IMR-90 (cell line): ENCODE measurements at regions of chr20 and their contacts with region 1.

Region 1: DNA sequence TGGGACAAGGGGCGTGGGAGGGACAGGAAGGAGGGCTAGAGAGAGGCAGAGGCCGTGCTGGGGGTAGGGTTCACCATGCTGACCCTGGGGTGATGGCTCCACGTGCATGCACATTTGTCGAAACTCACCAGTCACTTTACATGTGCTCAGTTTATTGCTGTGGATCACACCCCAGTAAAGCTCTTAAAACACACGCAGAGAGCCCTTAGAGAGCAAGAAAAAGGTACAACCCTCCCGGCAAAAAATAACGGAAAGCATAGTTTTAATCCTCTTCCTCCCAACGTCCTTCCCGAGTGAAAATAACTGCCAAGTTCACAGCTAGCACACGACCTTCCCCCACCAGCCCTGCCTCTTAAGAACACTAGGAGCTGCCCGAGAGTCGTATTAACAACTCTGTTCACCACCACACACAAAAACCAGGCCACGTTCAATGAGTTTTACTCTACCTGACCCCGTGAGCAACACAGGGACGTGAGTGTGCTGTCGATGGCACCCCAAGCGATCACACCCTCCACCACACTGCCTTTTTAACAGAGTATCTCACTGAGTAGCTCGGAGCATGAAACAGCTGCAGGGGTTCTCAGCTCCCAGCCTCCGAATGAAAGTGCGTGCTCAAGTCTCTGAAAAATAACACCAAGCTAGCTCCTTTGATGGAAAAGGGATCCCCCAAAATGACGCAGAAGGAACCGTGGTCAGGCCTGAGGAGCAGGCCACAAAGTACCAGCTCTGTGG is 39.7 kb downstream of the TAF4 start:
- DNase-seq: peak; percentile 74
- ATAC-seq: peak; percentile 76
- H3K4me3 ChIP-seq: no peak overlapping the region
- H3K27ac ChIP-seq: no peak overlapping the region
- H3K4me1 ChIP-seq: peaks cover 6% of the 10 kb centered on the region; the same call in 1 of the 2 replicates
- H3K27me3 ChIP-seq: no peaks in the 10 kb centered on the region
- CTCF ChIP-seq: peak; percentile 73
- POLR2A ChIP-seq: no peak
- RAD21 ChIP-seq: peak; percentile 72

Region 2: DNA sequence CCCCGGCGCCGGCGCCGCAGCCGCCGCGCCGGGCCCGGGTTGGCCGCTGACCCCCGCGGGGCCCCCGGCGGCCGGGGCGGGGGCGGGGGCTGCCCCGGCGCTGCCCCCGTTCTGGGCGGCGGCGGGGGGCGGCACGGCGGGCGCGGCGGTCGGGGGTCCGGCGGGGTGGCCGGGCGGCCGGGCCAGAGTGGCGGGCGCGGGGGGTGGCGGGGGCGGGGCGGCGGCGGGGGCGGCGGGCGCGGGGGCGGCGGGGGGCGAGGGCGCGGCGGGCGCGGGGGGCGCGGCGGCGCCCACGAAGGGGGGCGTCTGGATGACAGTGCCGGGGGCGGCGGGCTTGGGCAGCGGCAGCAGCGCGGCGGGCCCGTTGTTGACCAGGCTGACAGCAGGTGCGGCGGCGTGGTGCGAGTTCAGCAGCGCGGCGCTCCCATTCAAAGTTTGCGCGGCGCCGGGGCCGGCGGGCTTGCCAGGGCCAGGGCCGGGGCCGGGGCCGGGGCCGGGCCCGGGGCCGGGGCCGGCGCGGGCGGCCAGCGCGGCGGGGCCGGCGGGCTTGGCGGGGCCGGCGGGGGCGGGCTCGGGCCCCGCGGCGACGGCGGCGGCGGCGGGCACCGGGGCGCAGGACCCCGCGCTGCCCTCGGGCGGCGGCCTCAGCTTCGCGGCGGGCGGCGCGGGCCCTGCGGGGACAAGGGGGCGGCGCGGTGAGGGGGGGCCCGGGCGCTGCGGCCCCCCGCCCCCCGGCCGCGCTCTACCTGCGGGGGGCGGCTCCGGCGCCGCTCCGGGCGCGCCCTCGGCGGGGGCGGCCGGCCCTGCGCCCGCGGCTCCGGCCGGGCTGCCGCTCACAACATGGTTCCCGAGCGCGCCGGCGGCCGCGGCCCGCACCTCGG is 39.0 kb after region 1 on chr20:
- CTCF ChIA-PET with region 1: no interaction called
- POLR2A ChIA-PET with region 1: interaction called, 3 read pairs
- dilution Hi-C with region 1: no loop called
- in situ Hi-C with region 1: no loop called
- intact Hi-C with region 1: loop called (anchors 5 kb)
- DNase-seq: no peak
- ATAC-seq: peak; percentile 13
- H3K4me3 ChIP-seq: peak overlapping the region; percentile 100
- H3K27ac ChIP-seq: peak overlapping the region; percentile 85; the same call in 1 of the 2 replicates
- H3K4me1 ChIP-seq: peaks cover 16% of the 10 kb centered on the region
- H3K27me3 ChIP-seq: no peaks in the 10 kb centered on the region
- CTCF ChIP-seq: no peak
- POLR2A ChIP-seq: no peak
- RAD21 ChIP-seq: no peak

Region 3: GRCh38 chr20:62121776-62122631 is 96.0 kb after region 1 on chr20 and contains the start of gene LSM14B:
- CTCF ChIA-PET with region 1: no interaction called
- POLR2A ChIA-PET with region 1: no interaction called
- dilution Hi-C with region 1: no loop called
- in situ Hi-C with region 1: loop called (anchors 5 kb)
- intact Hi-C with region 1: loop called (anchors 1 kb)
- DNase-seq: peak; percentile 95
- ATAC-seq: peak; percentile 94
- H3K4me3 ChIP-seq: peak within 1 kb of the TSS; percentile 100
- H3K27ac ChIP-seq: peak within 1 kb of the TSS; percentile 82
- H3K4me1 ChIP-seq: peaks cover 11% of the 10 kb centered on the region
- H3K27me3 ChIP-seq: peaks cover 21% of the 10 kb centered on the region
- CTCF ChIP-seq: 0 out of 2 replicates have a peak, but pooled peaks have one; percentile 1
- POLR2A ChIP-seq: no peak
- RAD21 ChIP-seq: no peak
- total RNA-seq, gene LSM14B: 23.7 and 30.6 TPM in 2 replicates

Region 4: GRCh38 chr20:62129731-62130531 is 103.9 kb after region 1 on chr20:
- CTCF ChIA-PET with region 1: no interaction called
- POLR2A ChIA-PET with region 1: no interaction called
- dilution Hi-C with region 1: no loop called
- in situ Hi-C with region 1: loop called (anchors 5 kb)
- intact Hi-C with region 1: no loop called
- DNase-seq: no peak
- ATAC-seq: no peak
- H3K4me3 ChIP-seq: no peak overlapping the region
- H3K27ac ChIP-seq: no peak overlapping the region
- H3K4me1 ChIP-seq: peaks cover 3% of the 10 kb centered on the region; the same call in 1 of the 2 replicates
- H3K27me3 ChIP-seq: no peaks in the 10 kb centered on the region
- CTCF ChIP-seq: no peak
- POLR2A ChIP-seq: no peak
- RAD21 ChIP-seq: no peak

Region 5: DNA sequence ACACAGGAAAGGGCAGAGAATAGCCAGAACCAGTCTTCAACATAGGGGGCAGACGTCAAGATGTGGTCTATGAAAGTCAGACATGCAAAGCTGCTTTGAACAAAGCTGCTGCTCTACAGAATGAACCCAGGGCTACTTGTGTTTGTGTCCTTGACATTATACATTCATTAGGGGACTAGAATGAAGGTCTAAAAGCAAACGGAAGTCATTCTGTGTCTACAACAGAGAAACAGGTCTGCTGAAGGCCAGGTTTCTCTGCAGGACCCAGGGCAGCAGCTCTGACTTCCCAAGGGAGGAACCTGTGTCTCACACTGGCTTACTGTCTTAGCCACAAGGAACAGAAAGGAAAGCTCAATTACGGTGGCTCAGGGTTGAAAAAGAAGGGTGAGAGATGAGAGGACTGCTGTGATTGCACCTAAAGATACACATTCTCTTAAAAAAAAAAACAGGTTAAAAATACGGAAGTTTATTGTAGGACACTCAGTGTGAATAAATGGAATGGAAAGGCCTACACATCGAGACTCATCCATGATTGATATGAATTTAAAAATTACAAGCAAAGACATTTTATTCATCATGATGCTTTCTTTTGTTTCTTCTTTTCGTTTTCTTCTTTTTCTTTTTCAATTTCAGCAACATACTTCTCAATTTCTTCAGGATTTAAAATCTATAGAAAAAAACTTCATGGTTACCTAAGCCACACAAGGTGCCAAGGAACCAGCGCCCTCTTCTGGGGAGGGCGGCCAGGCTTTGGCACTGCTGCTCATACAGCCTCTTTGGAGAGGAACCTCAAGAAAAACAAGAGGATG is 110.5 kb after region 1 on chr20:
- CTCF ChIA-PET with region 1: interaction called, 5 read pairs
- POLR2A ChIA-PET with region 1: no interaction called
- dilution Hi-C with region 1: no loop called
- in situ Hi-C with region 1: no loop called
- intact Hi-C with region 1: loop called (anchors 1 kb)
- DNase-seq: peak; percentile 68
- ATAC-seq: peak; percentile 53
- H3K4me3 ChIP-seq: no peak overlapping the region
- H3K27ac ChIP-seq: no peak overlapping the region
- H3K4me1 ChIP-seq: peaks cover 10% of the 10 kb centered on the region; the same call in 1 of the 2 replicates
- H3K27me3 ChIP-seq: no peaks in the 10 kb centered on the region
- CTCF ChIP-seq: peak; percentile 76
- POLR2A ChIP-seq: no peak
- RAD21 ChIP-seq: peak; percentile 72